Panc1 (cell line): ENCODE measurements at regions of chr2 and their contacts with region 1.

Region 1: GRCh38 chr2:11344342-11344955 is at the start of gene ROCK2:
- DNase-seq: no peak
- ATAC-seq: peak; percentile 88
- H3K4me3 ChIP-seq: peak within 1 kb of the TSS; percentile 90 to 95
- H3K27ac ChIP-seq: peak within 1 kb of the TSS; percentile 93
- H3K4me1 ChIP-seq: peaks cover 38% of the 10 kb centered on the region
- H3K27me3 ChIP-seq: no peaks in the 10 kb centered on the region
- CTCF ChIP-seq: no peak
- total RNA-seq, gene ROCK2: 47.9 TPM

Region 2: DNA sequence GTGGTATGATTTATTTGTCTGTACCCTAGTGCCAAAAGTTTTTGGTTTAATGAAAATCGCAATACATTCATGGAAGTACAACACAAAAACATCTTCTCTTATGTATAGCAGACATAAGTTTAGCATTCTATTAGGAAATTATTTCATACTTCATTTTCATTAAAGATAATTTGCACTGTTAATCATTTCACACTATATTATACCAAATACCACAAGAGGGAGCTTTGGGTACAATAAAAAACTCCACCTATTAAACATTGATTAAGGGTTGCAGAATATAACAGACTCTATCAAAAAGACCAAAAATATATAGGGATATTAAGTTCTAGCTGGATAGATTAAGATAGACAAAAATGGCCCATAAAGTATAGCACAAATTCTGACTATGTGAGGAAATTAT is 110.1 kb before region 1 on chr2:
- CTCF ChIA-PET with region 1: no interaction called
- POLR2A ChIA-PET with region 1: no interaction called
- in situ Hi-C with region 1: no loop called
- intact Hi-C with region 1: loop called (anchors 10 kb)
- DNase-seq: no peak
- ATAC-seq: no peak
- H3K4me3 ChIP-seq: no peak overlapping the region
- H3K27ac ChIP-seq: no peak overlapping the region
- H3K4me1 ChIP-seq: no peaks in the 10 kb centered on the region
- H3K27me3 ChIP-seq: no peaks in the 10 kb centered on the region
- CTCF ChIP-seq: peak; percentile 43; the same call in 1 of the 2 replicates

Region 3: DNA sequence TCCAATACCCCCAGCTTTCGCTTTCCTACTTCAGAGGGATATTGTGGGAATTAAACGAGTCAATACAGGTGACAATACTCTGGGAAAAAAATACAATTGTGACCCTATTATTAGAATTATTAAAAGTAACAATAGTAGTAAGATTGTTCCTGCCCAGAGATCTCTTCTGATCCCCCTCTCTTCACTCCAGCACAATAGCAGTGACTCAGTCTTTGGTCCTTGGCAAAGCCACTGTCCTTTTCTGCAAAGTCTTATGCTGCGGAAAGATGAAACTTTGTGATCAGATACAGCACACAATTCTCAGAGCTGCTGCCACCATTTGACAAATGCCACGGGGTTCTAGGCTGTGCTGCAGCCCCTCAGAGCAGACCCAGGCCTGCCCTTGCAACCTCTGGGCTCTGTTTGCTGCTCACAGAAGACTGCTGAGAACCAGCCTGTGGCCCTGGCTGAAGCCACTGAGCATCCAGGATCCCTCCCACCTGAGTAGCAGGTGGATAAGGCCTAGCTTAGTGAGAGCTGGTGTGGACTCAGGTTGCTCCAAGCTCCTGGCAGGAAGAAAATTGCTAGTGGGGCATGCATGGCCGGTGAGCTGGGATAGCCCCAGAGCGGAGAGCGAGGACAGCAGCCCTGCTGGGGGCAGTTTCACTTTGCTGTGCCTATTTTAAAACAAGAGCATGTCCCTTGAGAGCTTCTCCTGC is 60.1 kb after region 1 on chr2:
- CTCF ChIA-PET with region 1: interaction called, 16 read pairs
- POLR2A ChIA-PET with region 1: no interaction called
- in situ Hi-C with region 1: no loop called
- intact Hi-C with region 1: no loop called
- DNase-seq: no peak
- ATAC-seq: no peak
- H3K4me3 ChIP-seq: no peak overlapping the region
- H3K27ac ChIP-seq: no peak overlapping the region
- H3K4me1 ChIP-seq: no peaks in the 10 kb centered on the region
- H3K27me3 ChIP-seq: no peaks in the 10 kb centered on the region
- CTCF ChIP-seq: no peak